CD4-positive, alpha-beta memory T cell (primary cell): ENCODE measurements at regions of chr12 and their contacts with region 1.

Region 1: DNA sequence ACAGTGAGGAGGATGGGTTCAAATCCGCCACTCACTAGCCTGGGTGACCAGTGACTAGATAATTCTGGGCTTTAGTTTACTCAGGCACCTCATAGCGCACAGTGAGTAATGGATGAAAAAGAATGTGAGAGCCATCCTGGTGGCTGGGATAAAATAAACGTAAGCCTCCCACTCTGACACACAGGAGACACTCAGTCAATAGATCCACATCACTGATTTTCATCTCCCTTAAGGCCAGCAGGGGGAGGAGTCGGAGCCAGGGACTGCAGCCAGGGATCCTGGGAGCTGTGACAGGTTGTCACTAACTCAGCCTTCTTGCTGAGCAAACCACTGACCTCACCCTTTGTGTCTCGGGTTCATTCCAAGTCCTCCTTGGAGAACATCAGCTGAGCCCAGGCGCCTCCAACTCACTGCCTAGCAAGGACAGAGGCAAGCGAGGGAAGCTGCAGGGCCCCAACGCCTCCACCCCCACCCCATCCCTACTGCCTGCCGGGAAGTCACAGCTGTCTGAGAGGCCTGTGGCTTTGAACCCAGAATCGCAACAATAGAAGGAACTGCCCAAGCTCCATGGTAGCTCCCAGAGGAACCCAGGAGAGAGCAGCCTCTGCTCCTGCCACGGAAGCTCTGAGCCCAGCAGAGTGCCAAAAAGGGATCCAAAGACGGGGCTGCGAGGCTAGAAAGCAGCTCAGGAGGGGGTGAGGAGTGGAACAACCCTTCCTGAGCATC is 30.7 kb downstream of the PXN start:
- DNase-seq: no peak
- H3K4me3 ChIP-seq: no peak overlapping the region
- H3K4me3 Mint-ChIP-seq: peak overlapping the region in 2 of 8 donors; percentile 7 to 39
- H3K27ac ChIP-seq: no peak overlapping the region
- H3K27ac Mint-ChIP-seq: peak overlapping the region; percentile 27 to 92 (median 73)
- H3K4me1 ChIP-seq: peaks cover 94% of the 10 kb centered on the region
- H3K4me1 Mint-ChIP-seq: peaks cover 51 to 96% (median 78%) of the 10 kb centered on the region in 4 donors
- H3K27me3 ChIP-seq: no peaks in the 10 kb centered on the region
- H3K27me3 Mint-ChIP-seq: no peaks in the 10 kb centered on the region

Region 2: DNA sequence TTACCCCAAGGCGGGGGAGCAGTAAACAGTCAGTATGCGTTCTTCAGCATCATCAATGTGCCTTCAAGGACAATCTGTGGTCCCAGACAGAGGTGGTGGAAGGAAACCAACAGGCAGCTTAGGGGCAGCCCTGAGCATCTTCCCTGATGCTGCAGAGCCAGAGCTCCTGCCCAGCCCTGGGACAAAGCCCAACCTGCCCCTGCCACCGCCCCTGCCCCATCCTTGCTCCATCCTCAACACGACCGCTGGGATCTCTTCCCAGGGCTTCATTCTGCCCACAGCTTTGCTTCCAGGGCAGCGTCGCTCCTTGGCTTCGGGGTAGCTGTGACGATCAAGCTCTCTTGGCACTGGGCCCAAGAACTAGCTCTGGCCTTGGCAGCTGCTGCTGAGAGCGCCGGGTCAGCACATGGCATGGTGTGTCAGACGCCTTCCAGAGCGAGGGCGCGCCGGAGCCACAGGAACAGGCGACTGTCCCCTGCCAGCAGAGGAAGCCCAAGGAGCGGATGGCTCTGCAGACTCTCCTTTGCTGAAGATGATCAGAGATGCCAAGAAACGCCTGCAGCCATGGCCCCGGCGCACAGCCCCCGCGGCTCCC is 134.3 kb before region 1 on chr12:
- CTCF ChIA-PET with region 1: no interaction called
- POLR2A ChIA-PET with region 1: no interaction called
- intact Hi-C with region 1: no loop called
- DNase-seq: no peak
- H3K4me3 ChIP-seq: no peak overlapping the region
- H3K4me3 Mint-ChIP-seq: no peak overlapping the region
- H3K27ac ChIP-seq: no peak overlapping the region
- H3K27ac Mint-ChIP-seq: peak overlapping the region in 6 of 7 donors; percentile 60 to 92 (median 66)
- H3K4me1 ChIP-seq: peaks cover 25% of the 10 kb centered on the region
- H3K4me1 Mint-ChIP-seq: peaks cover 11 to 43% (median 19%) of the 10 kb centered on the region in 4 donors
- H3K27me3 ChIP-seq: no peaks in the 10 kb centered on the region
- H3K27me3 Mint-ChIP-seq: no peaks in the 10 kb centered on the region

Region 3: GRCh38 chr12:120249875-120250795 is 15.3 kb after region 1 on chr12:
- CTCF ChIA-PET with region 1: interaction called, 1,075 read pairs
- POLR2A ChIA-PET with region 1: interaction called, 247 read pairs
- intact Hi-C with region 1: loop called (anchors 1 kb)
- DNase-seq: peak; percentile 52 to 61 (median 59)
- H3K4me3 ChIP-seq: peak overlapping the region; percentile 4 to 49
- H3K4me3 Mint-ChIP-seq: peak overlapping the region; percentile 65 to 91 (median 82)
- H3K27ac ChIP-seq: peak overlapping the region; percentile 50
- H3K27ac Mint-ChIP-seq: peak overlapping the region; percentile 81 to 99 (median 95)
- H3K4me1 ChIP-seq: peaks cover 90% of the 10 kb centered on the region
- H3K4me1 Mint-ChIP-seq: peaks cover 67 to 88% (median 78%) of the 10 kb centered on the region in 4 donors
- H3K27me3 ChIP-seq: no peaks in the 10 kb centered on the region
- H3K27me3 Mint-ChIP-seq: no peaks in the 10 kb centered on the region